ENCODE measurements at regions of chr20 and their contacts with region 1.

Region 1: DNA sequence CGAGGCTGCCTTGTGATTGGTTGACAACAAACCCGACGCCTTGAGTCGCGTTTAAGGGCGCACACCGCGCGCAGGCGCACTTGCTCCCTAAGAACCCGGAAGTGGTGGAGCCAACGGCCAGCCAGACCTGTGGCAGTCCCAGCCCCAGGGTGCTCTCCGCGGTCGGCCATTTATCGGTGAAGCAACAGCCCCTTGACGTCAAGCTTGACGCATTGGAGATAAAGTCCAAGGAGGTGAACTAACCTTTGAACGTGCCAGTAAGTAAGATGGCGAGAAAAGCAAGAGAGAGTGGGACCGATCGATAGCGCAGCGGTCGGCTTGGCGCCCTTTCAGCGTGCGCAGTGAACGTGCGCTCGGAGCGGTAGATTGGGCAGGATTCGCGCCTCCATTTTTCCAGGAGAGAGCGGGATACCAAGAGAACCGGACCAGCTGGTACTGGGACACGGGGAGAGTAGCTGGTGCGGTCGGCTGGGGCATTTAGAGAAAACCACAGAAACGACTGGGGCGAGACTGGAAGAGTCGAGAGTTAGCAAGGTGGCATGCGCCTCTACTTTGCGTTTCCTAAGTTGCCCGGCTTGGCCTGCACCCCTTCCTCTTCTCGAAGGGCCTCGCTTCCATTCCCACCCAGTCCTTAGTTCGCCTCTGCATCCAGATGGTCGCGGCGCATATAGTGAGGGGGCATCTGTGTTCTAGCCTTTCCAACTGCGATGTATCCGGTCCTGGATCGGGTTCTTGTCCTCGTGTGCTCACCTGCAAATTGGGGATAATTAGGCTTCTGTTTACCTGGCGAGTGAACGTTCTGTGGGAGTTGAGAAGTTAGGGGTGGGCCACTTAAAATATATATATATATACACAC is at the start of gene CSTF1:
- DNase-seq: peak; percentile 99
- H3K4me3 ChIP-seq: peak within 1 kb of the TSS; percentile 92
- CTCF ChIP-seq: no peak

Region 2: DNA sequence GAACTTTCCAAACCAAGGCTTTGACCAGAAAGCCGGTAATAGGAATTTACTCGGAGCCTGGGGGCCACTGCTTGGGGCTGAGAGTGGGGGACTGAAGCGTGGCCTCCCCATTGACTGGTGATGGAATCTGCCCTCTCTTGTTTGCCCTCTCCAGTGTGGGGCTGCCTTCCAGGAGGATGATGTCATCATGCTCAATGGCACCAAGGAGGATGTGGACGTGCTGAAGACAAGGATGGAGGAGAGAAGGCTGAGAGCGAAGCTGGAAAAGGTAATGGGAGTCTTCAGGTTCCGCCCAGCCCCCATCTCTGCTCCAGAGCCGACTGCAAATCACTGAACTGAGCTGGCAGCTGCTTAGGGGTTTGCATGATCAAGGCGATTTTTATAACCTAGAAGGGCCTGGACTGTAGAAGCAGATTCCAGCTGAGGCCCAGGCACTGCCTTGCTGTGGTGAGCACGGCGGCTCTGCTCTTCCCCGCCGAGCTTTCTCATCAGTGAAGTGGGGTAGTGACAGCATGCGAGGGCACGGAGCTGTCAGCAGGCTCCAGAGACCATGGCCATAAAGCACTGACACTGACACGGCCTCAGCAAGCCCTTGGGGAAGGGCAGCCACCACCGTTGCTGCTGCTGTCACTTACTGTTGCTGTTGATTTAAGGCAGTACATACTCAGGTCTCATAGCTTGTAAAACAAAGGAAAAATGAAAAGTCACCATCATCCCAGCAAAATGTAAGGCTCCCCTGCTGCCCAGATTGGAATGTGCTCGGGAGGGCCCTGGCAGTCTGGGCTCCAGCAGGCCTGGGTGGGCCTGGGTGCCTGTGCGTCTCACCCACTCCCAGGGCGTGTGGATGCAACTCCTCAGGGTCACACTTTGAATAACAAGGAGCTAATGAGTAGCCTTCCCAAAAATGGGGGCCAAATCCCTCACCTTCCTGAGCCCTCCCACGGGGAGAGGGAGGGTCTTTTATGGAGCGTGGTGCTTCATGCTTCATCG is 120.9 kb after region 1 on chr20:
- CTCF ChIA-PET with region 1: interaction called, 35 read pairs
- POLR2A ChIA-PET with region 1: no interaction called
- DNase-seq: no peak
- H3K4me3 ChIP-seq: no peak overlapping the region
- CTCF ChIP-seq: no peak

Region 3: DNA sequence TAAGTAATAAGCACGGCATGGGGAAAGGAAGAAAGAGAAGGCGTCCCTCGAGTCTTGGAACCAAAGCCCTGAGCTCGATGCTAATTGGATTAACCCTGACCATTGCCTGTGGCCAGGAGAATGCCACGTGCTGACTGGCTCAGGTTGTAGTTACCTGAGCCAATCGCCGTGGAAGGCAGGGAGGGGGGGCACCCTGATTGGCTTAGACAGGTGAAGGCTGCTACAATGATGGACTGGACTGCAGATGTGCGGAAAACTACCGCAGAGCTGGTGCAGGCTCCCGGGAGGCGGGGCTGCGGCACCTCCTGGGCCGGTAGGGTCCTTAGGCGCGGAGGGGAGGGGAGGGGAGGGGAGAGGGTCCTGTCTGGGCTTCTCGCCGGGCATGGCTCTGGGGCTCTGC is 357.9 kb after region 1 on chr20:
- CTCF ChIA-PET with region 1: no interaction called
- POLR2A ChIA-PET with region 1: no interaction called
- DNase-seq: no peak
- H3K4me3 ChIP-seq: no peak overlapping the region
- CTCF ChIP-seq: no peak

Measured in AG04449 (cell line).